Sciatic nerve (tissue), 2 donors: ENCODE measurements at regions of chr14 and their contacts with region 1.

Region 1: GRCh38 chr14:104978340-104978653 is at the start of gene AHNAK2:
- DNase-seq: peak; percentile 75
- ATAC-seq: peak; percentile 49
- total RNA-seq, gene AHNAK2: 77.7 TPM

Region 2: GRCh38 chr14:104953896-104954656 is 24.2 kb before region 1 on chr14:
- intact Hi-C with region 1: no loop called
- DNase-seq: no peak
- ATAC-seq: peak; percentile 38

Region 3: GRCh38 chr14:105020815-105021655 is 42.7 kb after region 1 on chr14 and contains the start of gene CDCA4:
- intact Hi-C with region 1: loop called (anchors 2 kb)
- DNase-seq: peak; percentile 97
- ATAC-seq: peak; percentile 98
- total RNA-seq, gene CDCA4: 5.5 TPM